CD8-positive, alpha-beta memory T cell (primary cell): ENCODE measurements at regions of chr1 and their contacts with region 1.

Region 1: DNA sequence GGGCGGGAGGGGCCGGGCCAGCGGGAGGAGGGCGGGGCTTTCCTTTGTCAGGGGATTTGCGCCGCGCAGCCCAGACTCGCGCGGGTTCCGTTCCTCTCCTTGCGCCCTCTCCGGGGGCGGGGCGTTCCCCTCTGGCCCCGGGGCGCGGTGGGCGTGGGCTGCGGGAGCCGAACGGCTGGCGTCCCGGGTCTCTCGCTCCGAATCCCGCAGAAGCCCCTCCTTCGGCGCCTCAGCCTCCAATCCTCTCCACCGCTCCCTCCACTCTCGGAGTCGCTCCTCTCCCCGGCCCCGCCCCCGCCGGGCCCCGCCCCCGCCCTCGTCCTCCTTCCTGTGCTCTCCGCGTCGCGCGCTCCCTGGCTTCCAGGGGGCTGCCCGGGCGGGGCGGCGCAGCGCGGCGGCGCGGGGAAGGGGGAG is 82.8 kb upstream of the BMP8A start:
- DNase-seq: peak; percentile 74 to 86 (median 82)
- H3K4me3 ChIP-seq: peak overlapping the region; percentile 56
- H3K4me3 Mint-ChIP-seq: peak overlapping the region; percentile 50 to 94 (median 85)
- H3K27ac ChIP-seq: peak overlapping the region; percentile 38
- H3K27ac Mint-ChIP-seq: no peak overlapping the region
- H3K4me1 ChIP-seq: peaks cover 24% of the 10 kb centered on the region
- H3K4me1 Mint-ChIP-seq: peaks cover 55 to 70% (median 69%) of the 10 kb centered on the region in 3 donors
- H3K27me3 ChIP-seq: no peaks in the 10 kb centered on the region
- H3K27me3 Mint-ChIP-seq: no peaks in the 10 kb centered on the region

Region 2: DNA sequence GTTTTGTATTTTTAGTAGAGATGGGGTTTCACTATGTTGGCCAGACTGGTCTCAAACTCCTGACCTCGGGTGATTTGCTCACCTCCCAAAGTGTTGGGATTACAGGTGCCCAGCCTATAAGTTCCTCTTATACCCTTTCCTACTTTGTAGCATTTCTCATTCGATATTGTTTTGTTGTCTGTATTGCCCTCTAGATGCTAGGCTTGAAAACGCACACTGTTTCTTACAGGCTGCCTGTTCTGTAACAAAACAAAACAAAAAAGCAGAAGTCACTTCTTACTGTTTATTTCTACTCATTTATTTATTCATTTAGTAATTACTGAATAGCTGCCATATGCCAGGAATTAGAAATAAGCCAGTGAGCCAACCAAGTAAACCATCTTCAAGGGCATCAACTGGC is 54.1 kb before region 1 on chr1:
- CTCF ChIA-PET with region 1: no interaction called
- POLR2A ChIA-PET with region 1: no interaction called
- DNase-seq: no peak
- H3K4me3 ChIP-seq: no peak overlapping the region
- H3K4me3 Mint-ChIP-seq: no peak overlapping the region
- H3K27ac ChIP-seq: no peak overlapping the region
- H3K27ac Mint-ChIP-seq: no peak overlapping the region
- H3K4me1 ChIP-seq: no peaks in the 10 kb centered on the region
- H3K4me1 Mint-ChIP-seq: peaks cover 0 to 4% (median 0%) of the 10 kb centered on the region in 3 donors
- H3K27me3 ChIP-seq: no peaks in the 10 kb centered on the region
- H3K27me3 Mint-ChIP-seq: no peaks in the 10 kb centered on the region

Region 3: DNA sequence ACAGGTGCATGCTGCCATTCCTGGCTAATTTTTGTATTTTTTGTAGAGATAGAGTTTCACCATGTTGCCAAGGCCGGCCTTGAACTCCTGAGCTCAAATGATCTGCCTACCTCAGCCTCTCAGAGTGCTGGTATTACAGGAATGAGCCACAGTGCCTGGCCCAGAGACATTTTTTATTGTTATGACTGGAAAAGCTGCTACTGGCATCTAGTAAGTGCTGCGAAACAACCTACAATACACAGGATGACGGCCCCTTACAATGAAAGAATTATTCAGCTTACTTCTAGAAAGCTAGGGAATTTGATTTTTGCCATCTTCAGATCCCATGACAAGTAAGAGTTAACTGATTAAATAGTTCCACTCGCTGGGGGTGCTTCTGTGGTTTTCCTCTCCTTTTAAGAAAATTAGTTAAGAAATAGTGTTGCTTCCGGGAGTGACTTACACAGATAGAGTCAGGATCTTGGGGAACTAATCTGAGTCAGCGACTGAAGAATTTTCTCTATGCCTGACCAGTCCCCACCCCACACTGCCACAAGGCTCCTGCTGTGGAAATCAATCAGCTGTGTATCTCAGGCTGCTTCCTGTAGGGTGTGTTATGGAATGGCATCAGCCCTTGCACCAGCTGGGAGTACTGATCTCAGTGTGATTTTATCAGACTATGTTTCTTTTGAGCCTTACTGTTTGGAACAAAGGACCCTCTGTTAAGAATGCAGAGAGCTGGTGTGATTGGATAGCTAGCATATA is 10.2 kb before region 1 on chr1:
- CTCF ChIA-PET with region 1: interaction called, 23 read pairs
- POLR2A ChIA-PET with region 1: interaction called, 6 read pairs
- DNase-seq: no peak
- H3K4me3 ChIP-seq: no peak overlapping the region
- H3K4me3 Mint-ChIP-seq: peak overlapping the region in 6 of 7 donors; percentile 36 to 75 (median 61)
- H3K27ac ChIP-seq: no peak overlapping the region
- H3K27ac Mint-ChIP-seq: peak overlapping the region; percentile 18 to 73 (median 44)
- H3K4me1 ChIP-seq: peaks cover 40% of the 10 kb centered on the region
- H3K4me1 Mint-ChIP-seq: peaks cover 68 to 73% (median 72%) of the 10 kb centered on the region in 3 donors
- H3K27me3 ChIP-seq: no peaks in the 10 kb centered on the region
- H3K27me3 Mint-ChIP-seq: peaks cover 0 to 1% of the 10 kb centered on the region in 2 donors

Region 4: GRCh38 chr1:39425151-39425550 is 16.5 kb after region 1 on chr1:
- CTCF ChIA-PET with region 1: interaction called, 13 read pairs
- POLR2A ChIA-PET with region 1: no interaction called
- DNase-seq: no peak
- H3K4me3 ChIP-seq: no peak overlapping the region
- H3K4me3 Mint-ChIP-seq: no peak overlapping the region
- H3K27ac ChIP-seq: no peak overlapping the region
- H3K27ac Mint-ChIP-seq: peak overlapping the region in 6 of 8 donors; percentile 2 to 61 (median 11)
- H3K4me1 ChIP-seq: no peaks in the 10 kb centered on the region
- H3K4me1 Mint-ChIP-seq: peaks cover 8 to 21% (median 10%) of the 10 kb centered on the region in 3 donors
- H3K27me3 ChIP-seq: no peaks in the 10 kb centered on the region
- H3K27me3 Mint-ChIP-seq: no peaks in the 10 kb centered on the region

Region 5: GRCh38 chr1:39431927-39432326 is 23.3 kb after region 1 on chr1:
- CTCF ChIA-PET with region 1: interaction called, 10 read pairs
- POLR2A ChIA-PET with region 1: no interaction called
- DNase-seq: no peak
- H3K4me3 ChIP-seq: no peak overlapping the region
- H3K4me3 Mint-ChIP-seq: no peak overlapping the region
- H3K27ac ChIP-seq: no peak overlapping the region
- H3K27ac Mint-ChIP-seq: peak overlapping the region in 4 of 8 donors; percentile 25 to 82 (median 40)
- H3K4me1 ChIP-seq: no peaks in the 10 kb centered on the region
- H3K4me1 Mint-ChIP-seq: peaks cover 0 to 4% (median 0%) of the 10 kb centered on the region in 3 donors
- H3K27me3 ChIP-seq: no peaks in the 10 kb centered on the region
- H3K27me3 Mint-ChIP-seq: no peaks in the 10 kb centered on the region